BJ (cell line): ENCODE measurements at regions of chr3 and their contacts with region 1.

Region 1: GRCh38 chr3:184289426-184289938 is 9.6 kb upstream of the PSMD2 start:
- DNase-seq: no peak
- H3K4me3 ChIP-seq: no peak overlapping the region
- H3K27me3 ChIP-seq: peaks cover 5% of the 10 kb centered on the region; the same call in 1 of the 2 replicates
- CTCF ChIP-seq: peak; percentile 79

Region 2: DNA sequence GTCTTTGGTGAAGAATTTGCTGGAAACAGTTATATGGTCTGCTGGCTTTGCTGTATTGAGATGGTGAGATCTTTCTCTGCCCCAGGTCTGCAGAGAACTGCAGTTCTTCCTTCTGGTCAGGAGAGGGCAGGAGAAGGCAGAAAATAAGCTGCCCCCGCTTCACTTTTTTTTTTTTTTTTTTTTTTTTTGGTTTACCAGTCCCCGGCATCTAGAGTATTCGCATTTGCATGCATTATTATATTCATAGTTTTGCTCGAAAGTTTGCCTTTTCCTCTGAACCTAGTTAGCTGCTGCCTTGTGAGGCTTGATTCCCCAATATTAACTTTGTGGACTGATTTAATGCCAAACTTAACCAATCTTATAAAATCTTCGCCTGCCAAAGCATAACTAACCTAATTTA is 394.2 kb before region 1 on chr3:
- CTCF ChIA-PET with region 1: interaction called, 13 read pairs
- POLR2A ChIA-PET with region 1: no interaction called
- DNase-seq: no peak
- H3K4me3 ChIP-seq: no peak overlapping the region
- H3K27me3 ChIP-seq: peaks cover 3% of the 10 kb centered on the region; the same call in 1 of the 2 replicates
- CTCF ChIP-seq: peak; percentile 84

Region 3: GRCh38 chr3:184196536-184196935 is 92.9 kb before region 1 on chr3:
- CTCF ChIA-PET with region 1: no interaction called
- POLR2A ChIA-PET with region 1: no interaction called
- DNase-seq: no peak
- H3K4me3 ChIP-seq: no peak overlapping the region
- H3K27me3 ChIP-seq: no peaks in the 10 kb centered on the region
- CTCF ChIP-seq: no peak

Region 4: GRCh38 chr3:184272269-184272668 is 17.2 kb before region 1 on chr3:
- CTCF ChIA-PET with region 1: interaction called, 10 read pairs
- POLR2A ChIA-PET with region 1: no interaction called
- DNase-seq: no peak
- H3K4me3 ChIP-seq: no peak overlapping the region
- H3K27me3 ChIP-seq: peaks cover 23% of the 10 kb centered on the region
- CTCF ChIP-seq: no peak